ENCODE measurements at regions of chr14 and their contacts with region 1.

Region 1: DNA sequence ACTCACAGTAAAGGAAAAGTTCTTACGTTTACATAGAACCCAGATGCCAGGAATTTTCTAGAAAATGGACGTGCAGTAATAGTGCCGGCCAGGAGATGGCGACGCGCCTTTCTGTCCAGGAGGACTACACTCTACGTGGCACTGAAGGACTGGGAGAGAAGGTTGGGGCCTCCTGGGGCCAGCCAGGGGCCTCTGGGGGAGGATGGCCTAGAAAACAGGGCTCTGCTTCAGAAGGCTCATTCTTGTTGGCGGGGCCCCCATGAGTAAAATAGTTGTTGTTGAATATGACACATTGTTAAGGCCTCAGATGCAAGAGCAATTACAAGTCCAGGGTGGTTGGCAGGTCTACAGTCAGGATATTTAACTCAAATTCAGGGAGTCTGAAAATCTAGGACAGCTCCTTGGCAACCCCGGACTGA is 120.1 kb upstream of the MAX start:
- DNase-seq: peak; percentile 86
- H3K4me3 ChIP-seq: no peak overlapping the region
- H3K27ac ChIP-seq: no peak overlapping the region
- H3K4me1 ChIP-seq: peaks cover 5 to 54% (median 21%) of the 10 kb centered on the region in 6 donors
- H3K27me3 ChIP-seq: no peaks in the 10 kb centered on the region
- CTCF ChIP-seq: peak; percentile 35 to 84 (median 71)
- POLR2A ChIP-seq: no peak

Region 2: GRCh38 chr14:64736271-64737122 is 486.0 kb before region 1 on chr14:
- intact Hi-C with region 1: no loop called
- DNase-seq: peak; percentile 64
- H3K4me3 ChIP-seq: no peak overlapping the region
- H3K27ac ChIP-seq: peak overlapping the region in 2 of 8 donors; percentile 26 to 33
- H3K4me1 ChIP-seq: peaks cover 7 to 22% (median 11%) of the 10 kb centered on the region in 6 donors
- H3K27me3 ChIP-seq: no peaks in the 10 kb centered on the region
- CTCF ChIP-seq: no peak
- POLR2A ChIP-seq: no peak

Region 3: DNA sequence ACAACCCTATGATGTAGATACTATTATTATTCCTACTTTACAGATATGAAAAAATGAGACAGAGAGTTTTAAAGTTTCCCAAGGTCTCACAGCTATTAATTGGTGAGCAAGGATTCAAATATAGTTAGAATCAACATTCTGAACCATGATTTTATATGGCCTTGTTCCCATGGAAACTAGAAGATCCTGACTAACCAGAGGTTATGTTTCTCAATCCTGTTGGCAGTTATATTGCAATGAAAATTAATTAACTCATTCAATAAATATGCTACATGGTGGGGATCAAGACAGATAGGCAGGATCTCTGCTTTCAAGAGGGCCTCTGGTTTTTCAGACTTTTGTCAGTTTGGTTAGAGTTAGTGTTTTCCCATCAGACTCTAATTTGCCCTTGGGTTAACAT is 180.8 kb after region 1 on chr14:
- intact Hi-C with region 1: loop called (anchors 10 kb)
- DNase-seq: no peak
- H3K4me3 ChIP-seq: no peak overlapping the region
- H3K27ac ChIP-seq: no peak overlapping the region
- H3K4me1 ChIP-seq: no peaks in the 10 kb centered on the region
- H3K27me3 ChIP-seq: no peaks in the 10 kb centered on the region
- CTCF ChIP-seq: no peak
- POLR2A ChIP-seq: no peak

Region 4: GRCh38 chr14:65604936-65605335 is 382.5 kb after region 1 on chr14:
- intact Hi-C with region 1: loop called (anchors 10 kb)
- DNase-seq: no peak
- H3K4me3 ChIP-seq: no peak overlapping the region
- H3K27ac ChIP-seq: peak overlapping the region in 2 of 8 donors; percentile 12 to 29
- H3K4me1 ChIP-seq: peaks cover 0 to 15% (median 0%) of the 10 kb centered on the region in 6 donors
- H3K27me3 ChIP-seq: no peaks in the 10 kb centered on the region
- CTCF ChIP-seq: peak in 4 of 11 experiments; percentile 7 to 25 (median 18)
- POLR2A ChIP-seq: no peak

Measured in spleen (tissue), 13 donors.